ENCODE measurements at regions of chr2 and their contacts with region 1.

Region 1: DNA sequence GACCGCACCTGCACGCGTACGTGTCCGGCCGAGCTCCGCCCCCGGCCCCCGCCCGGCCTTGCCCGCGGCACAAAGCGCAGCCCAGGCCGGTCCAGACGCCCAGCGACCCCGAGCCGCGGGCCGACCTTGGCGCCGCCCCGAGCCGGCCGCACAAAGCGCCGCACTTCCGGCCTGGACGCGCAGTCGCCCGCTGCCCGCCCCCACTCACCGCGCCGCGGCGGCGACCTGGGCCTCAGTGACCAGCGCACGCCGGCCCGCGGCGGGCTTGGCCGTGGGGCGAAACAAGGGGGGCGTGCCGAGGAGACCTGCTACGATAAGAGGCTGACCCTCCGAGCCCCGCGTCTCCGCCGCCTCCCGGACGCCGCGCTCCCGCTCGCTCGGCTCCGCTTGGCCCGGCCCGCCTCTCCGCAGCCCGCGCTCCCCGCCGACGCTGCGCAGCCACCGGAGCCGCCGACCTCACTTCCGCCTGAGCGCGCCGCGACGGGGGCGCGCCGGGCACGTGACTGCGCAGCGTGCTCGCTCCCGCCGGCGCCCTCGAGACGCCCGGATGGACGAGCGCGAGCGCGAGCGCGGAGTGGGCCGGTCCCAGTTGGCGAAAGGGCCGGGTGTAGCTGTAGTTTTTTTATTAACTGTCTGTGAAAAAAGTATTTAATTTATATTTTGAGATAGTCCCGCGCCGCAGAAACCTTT is at the start of gene FAM168B:
- DNase-seq: peak; percentile 90
- ATAC-seq: peak; percentile 77
- H3K4me3 Mint-ChIP-seq: peak within 1 kb of the TSS; percentile 91
- H3K27ac Mint-ChIP-seq: peak within 1 kb of the TSS; percentile 98
- H3K4me1 Mint-ChIP-seq: peaks cover 30% of the 10 kb centered on the region
- H3K27me3 Mint-ChIP-seq: peaks cover 3% of the 10 kb centered on the region
- total RNA-seq, gene FAM168B: 40.6 to 65.5 TPM

Region 2: DNA sequence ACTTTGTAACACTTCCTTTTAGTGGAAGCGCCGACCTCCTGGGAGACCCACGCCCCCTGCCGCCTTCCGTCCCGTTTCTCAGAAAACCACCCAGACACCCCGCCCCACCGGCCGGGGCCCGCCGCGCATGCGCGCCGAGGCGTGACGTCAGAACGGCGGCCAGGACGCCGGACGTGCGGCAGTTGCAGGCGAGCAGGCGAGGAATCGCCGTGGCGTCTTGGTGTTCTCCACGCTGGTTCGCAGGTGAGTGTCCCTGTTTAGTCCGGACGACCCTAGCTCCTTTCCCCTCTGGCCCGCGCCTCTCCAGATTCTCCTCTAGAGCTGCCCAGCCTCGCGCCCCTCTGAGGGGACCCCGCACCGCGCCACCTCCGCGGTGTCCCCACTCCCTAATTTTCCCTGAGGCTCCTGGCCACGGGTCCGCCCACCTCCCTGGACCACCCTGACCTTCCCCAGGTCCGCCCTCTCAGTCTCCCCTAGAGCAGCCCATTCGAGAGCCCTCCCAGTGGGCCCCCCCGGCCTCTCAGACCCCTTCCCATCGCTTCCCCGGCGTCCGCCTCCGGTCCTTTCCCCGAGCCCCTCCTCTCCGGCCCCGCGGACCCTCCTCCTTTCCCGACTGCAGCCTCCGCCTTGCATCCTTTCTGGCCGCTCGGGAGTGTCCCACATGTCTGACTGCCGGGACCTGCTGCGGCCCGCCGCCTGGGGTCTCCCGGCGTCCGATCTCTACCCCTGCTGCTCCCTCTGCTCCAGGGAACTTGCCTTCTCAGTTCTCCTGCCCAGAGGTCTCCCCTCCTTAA is 12.2 kb after region 1 on chr2 and contains the start of gene PLEKHB2:
- CTCF ChIA-PET with region 1: interaction called, 22 read pairs
- DNase-seq: peak; percentile 95
- ATAC-seq: peak; percentile 82
- H3K4me3 Mint-ChIP-seq: peak within 1 kb of the TSS; percentile 93
- H3K27ac Mint-ChIP-seq: peak within 1 kb of the TSS; percentile 93
- H3K4me1 Mint-ChIP-seq: peaks cover 48% of the 10 kb centered on the region
- H3K27me3 Mint-ChIP-seq: no peaks in the 10 kb centered on the region
- total RNA-seq, gene PLEKHB2: 58.5 to 64.3 TPM

Region 3: DNA sequence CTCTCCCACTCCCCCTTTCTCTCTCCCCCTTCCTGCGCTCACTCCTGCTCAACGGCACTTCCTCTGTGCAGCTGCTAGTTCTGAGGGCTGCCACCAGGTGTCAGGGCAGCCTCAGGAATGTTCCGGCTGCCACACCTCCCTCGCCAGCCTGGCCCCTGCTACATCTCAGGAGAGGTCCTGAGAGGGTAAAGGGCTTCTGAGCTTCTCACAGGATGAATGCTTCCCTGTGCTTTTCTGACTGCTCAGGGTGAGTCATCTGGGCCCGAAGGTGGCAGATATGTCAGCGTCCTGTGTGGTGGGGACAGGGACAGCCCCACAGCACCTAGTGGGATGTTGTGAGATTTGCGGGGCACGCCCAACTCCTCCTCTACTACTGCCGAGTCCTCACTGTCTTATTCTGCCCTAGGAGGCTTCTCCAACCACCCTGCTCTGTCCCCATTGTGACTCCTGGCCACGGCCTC is 61.0 kb after region 1 on chr2:
- CTCF ChIA-PET with region 1: no interaction called
- DNase-seq: peak; percentile 87
- ATAC-seq: peak; percentile 92
- H3K4me3 Mint-ChIP-seq: no peak overlapping the region
- H3K27ac Mint-ChIP-seq: peak overlapping the region; percentile 2
- H3K4me1 Mint-ChIP-seq: peaks cover 29% of the 10 kb centered on the region
- H3K27me3 Mint-ChIP-seq: no peaks in the 10 kb centered on the region

Measured in activated CD8-positive, alpha-beta memory T cell treated with anti-CD3 and anti-CD28 coated beads, Interleukin-2, amount 10 ng/mL, durations not matched to agents 7 days and 5 days (primary cell).